ENCODE measurements at regions of chr13 and their contacts with region 1.

Region 1: DNA sequence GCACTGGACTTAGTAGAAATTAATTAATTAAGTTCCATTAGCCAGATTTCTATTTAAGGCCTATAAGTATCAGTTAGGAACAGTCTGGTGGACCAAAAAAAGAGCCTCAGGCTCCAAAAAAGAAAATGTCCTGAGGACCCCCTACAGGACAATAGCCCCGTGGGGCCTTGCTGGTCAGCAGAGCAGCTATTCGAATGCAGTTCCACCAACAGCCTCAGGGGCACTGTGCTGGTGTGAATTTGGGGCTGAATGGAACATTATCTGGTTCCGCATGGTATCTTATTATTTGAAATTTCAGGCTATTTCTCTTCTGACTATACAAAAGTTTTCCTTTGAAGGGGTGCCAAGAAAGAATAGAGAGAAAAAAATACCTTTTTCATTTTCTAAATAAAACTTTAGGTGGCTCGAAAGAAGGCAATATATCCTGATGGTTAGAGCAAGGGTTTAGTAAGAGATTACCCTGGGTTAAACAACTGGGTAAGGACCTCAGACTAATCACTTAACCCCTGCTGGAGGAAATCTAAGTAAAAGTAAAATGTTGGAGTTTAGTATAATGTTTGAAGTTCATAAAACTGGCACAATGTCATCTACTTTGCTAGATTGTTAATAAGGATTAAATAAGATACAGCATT is 147.2 kb downstream of the MIPEP start:
- DNase-seq: peak; percentile 65 to 66
- H3K4me3 ChIP-seq: no peak overlapping the region
- H3K4me3 Mint-ChIP-seq: no peak overlapping the region
- H3K27ac Mint-ChIP-seq: peak overlapping the region; percentile 64
- H3K4me1 ChIP-seq: peaks cover 39% of the 10 kb centered on the region
- H3K4me1 Mint-ChIP-seq: peaks cover 46% of the 10 kb centered on the region
- H3K27me3 ChIP-seq: no peaks in the 10 kb centered on the region
- H3K27me3 Mint-ChIP-seq: no peaks in the 10 kb centered on the region
- CTCF ChIP-seq: peak; percentile 65 to 81

Region 2: DNA sequence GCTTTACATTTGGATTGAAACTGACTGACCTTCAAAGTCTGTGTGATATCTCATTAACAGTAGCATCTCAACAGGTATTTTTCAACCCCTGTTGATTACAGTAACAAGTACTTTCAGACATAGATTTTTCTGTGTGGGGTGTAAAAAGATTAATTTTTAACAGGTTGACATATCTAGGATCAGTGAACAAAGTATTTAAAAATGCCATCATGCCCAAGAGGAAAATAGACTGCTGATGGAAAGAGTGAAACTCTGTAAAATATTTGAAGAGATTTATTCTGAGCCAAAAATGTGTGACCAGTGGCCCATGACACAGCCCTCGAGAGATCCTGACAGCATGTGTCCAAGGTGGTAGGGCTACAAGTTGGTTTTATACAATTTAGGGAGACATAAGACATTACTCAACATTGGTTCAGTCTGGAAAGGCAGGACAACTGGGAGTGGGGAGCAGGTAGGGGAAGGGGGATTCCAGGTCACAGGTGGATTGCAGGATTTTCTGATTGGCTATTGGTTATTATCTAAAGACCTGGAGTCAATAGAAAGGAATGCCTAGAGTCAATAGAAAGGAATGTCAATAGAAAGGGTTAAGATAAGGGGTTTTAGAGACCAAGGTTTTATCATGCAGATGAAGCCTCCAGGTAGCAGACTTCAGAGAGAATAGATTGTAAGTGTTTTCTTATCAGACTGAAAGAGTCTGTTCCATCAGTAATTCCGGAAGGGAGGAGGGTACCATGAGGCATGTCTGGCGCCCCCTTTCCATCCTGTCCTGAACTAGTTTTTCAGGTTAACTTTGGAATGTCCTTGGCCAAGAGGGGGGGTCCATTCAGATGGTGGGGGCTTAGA is 142.7 kb before region 1 on chr13:
- CTCF ChIA-PET with region 1: no interaction called
- POLR2A ChIA-PET with region 1: no interaction called
- intact Hi-C with region 1: loop called (anchors 1 kb)
- DNase-seq: peak; percentile 90 to 93
- H3K4me3 ChIP-seq: no peak overlapping the region
- H3K4me3 Mint-ChIP-seq: peak overlapping the region; percentile 42
- H3K27ac Mint-ChIP-seq: peak overlapping the region; percentile 94
- H3K4me1 ChIP-seq: peaks cover 35% of the 10 kb centered on the region
- H3K4me1 Mint-ChIP-seq: peaks cover 45% of the 10 kb centered on the region
- H3K27me3 ChIP-seq: no peaks in the 10 kb centered on the region
- H3K27me3 Mint-ChIP-seq: no peaks in the 10 kb centered on the region
- CTCF ChIP-seq: peak in 1 of 2 experiments; percentile 52

Region 3: DNA sequence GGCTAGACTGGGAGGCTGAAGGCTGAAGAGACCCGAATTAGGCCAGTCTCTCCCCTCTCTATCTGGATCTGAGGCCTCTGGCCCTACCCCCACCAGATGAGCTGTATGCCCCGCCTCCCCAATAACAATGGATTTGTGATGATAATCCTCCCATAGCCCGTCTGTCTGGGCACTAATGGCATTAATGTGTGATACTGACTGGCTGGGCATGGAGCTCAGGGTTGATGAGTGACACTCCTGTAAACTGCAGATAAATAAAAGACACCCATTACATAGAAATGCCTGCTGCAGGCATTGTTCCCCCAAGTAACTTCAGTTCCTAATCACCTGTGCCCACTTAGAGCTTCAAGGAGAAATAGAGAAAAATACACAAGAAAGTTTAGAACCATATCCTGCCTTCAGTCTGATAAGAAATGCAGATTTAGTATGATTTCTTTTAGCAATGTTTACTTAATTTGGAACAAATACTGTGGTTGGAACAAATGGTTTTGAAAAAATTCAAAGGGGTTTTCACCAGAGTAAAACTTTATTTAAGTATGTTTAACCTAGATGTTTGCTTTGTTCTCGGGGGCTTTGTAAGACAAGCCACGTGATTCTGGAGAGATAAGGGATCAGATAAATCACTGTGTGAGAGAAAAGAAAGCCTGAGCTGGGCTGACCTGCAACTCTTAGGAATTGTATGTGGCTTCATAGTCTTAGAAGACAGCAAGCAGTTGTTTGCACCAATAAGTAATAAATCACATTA is 111.5 kb before region 1 on chr13:
- CTCF ChIA-PET with region 1: interaction called, 3 read pairs
- POLR2A ChIA-PET with region 1: no interaction called
- intact Hi-C with region 1: loop called (anchors 5 kb)
- DNase-seq: peak; percentile 72 to 76
- H3K4me3 ChIP-seq: no peak overlapping the region
- H3K4me3 Mint-ChIP-seq: peak overlapping the region; percentile 52
- H3K27ac Mint-ChIP-seq: peak overlapping the region; percentile 87
- H3K4me1 ChIP-seq: peaks cover 76% of the 10 kb centered on the region
- H3K4me1 Mint-ChIP-seq: peaks cover 47% of the 10 kb centered on the region
- H3K27me3 ChIP-seq: no peaks in the 10 kb centered on the region
- H3K27me3 Mint-ChIP-seq: no peaks in the 10 kb centered on the region
- CTCF ChIP-seq: no peak

Region 4: DNA sequence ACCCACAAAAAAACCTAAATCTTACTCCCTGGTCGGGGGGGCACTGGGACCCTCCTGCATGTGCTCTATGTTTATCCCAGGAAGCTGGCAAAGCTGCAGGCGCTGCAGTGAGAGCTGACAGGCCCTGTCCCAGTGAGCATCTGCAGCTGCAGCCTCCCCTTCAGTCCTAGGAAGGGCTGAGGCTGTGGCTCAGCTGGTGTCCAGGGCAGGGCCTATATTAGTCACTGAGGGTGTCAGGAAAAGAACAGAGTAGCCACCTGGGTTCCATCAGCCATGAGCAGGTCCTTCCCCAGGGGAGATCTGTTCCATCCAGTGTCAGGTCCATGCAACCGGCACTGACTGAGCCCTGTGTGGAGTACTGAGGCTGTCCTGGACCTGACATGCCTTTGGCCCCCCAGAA is 51.3 kb before region 1 on chr13:
- CTCF ChIA-PET with region 1: no interaction called
- POLR2A ChIA-PET with region 1: no interaction called
- intact Hi-C with region 1: loop called (anchors 5 kb)
- DNase-seq: no peak
- H3K4me3 ChIP-seq: no peak overlapping the region
- H3K4me3 Mint-ChIP-seq: no peak overlapping the region
- H3K27ac Mint-ChIP-seq: no peak overlapping the region
- H3K4me1 ChIP-seq: no peaks in the 10 kb centered on the region
- H3K4me1 Mint-ChIP-seq: peaks cover 6% of the 10 kb centered on the region
- H3K27me3 ChIP-seq: no peaks in the 10 kb centered on the region
- H3K27me3 Mint-ChIP-seq: no peaks in the 10 kb centered on the region
- CTCF ChIP-seq: no peak

Region 5: DNA sequence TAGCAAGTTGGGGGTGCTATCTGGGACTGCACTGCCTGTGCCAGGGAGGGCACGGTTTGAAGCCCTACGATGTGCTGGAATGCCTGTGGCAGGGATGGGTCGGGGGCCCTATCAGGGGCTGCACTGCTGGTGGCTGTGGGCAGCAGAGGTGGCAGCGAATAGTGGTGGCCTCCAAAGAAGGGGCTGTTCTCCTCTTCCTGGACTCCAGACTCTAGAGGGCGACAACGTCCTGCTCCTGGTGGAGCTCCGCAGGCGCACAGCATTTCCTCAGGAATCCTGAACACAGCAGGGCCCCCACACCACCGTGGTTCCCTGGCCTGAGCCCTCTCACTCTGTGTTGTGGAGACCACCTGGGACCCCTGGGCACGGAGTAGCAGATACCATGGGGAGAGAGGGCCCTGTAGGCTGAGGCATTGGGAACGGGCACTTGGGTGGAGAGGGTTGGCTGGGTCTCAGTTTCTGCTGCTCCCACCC is 26.2 kb before region 1 on chr13:
- CTCF ChIA-PET with region 1: interaction called, 6 read pairs
- POLR2A ChIA-PET with region 1: no interaction called
- intact Hi-C with region 1: loop called (anchors 2 kb)
- DNase-seq: peak; percentile 72 to 74
- H3K4me3 ChIP-seq: no peak overlapping the region
- H3K4me3 Mint-ChIP-seq: no peak overlapping the region
- H3K27ac Mint-ChIP-seq: peak overlapping the region; percentile 24
- H3K4me1 ChIP-seq: peaks cover 22% of the 10 kb centered on the region
- H3K4me1 Mint-ChIP-seq: peaks cover 26% of the 10 kb centered on the region
- H3K27me3 ChIP-seq: no peaks in the 10 kb centered on the region
- H3K27me3 Mint-ChIP-seq: no peaks in the 10 kb centered on the region
- CTCF ChIP-seq: peak; percentile 46 to 51

Region 6: DNA sequence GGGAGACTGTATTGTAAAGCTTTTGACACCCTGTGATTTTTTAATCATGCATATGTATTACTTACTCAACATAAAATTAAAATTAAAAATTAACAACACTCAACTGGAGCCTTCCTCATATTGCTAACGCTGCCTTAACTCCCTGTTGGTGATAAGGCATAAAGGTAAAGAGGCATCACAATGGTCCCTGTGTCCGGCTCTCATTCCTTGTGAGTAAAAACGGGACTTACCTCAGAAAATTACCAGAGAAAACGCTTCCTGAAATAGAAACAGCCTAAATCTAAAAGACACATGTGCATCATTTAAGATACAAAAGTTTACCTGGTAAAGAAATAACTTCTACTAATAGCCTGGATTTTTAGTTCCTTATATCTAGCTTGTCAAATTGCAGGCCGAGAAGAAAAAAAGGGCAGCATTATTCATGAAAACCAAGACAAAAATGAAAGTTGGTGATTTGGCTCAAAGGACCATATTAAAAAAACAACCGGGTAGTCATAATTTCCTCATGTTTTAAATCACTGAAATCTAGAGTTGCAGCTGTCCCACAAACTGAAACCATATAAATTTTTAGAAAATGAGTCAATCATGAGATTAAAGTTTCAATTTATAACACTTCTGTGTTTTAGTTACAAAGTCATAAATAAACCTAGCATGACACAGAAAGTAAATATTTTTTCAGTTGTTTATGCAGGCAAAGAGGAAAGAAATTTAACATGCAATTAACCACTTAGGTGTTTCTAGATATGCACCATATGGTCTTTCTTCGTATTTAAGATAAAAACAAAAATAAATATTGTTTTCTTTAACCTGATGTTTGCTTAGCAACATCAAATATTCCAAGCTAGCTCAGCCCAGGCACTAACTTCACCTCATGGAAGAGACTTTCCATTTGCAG is 52.5 kb after region 1 on chr13:
- CTCF ChIA-PET with region 1: no interaction called
- POLR2A ChIA-PET with region 1: no interaction called
- intact Hi-C with region 1: no loop called
- DNase-seq: no peak
- H3K4me3 ChIP-seq: no peak overlapping the region
- H3K4me3 Mint-ChIP-seq: no peak overlapping the region
- H3K27ac Mint-ChIP-seq: no peak overlapping the region
- H3K4me1 ChIP-seq: peaks cover 11% of the 10 kb centered on the region; the same call in 1 of the 2 replicates
- H3K4me1 Mint-ChIP-seq: peaks cover 4% of the 10 kb centered on the region
- H3K27me3 ChIP-seq: no peaks in the 10 kb centered on the region
- H3K27me3 Mint-ChIP-seq: no peaks in the 10 kb centered on the region
- CTCF ChIP-seq: no peak

Region 7: GRCh38 chr13:23810685-23811240 is 68.8 kb after region 1 on chr13:
- CTCF ChIA-PET with region 1: no interaction called
- POLR2A ChIA-PET with region 1: no interaction called
- intact Hi-C with region 1: loop called (anchors 1 kb)
- DNase-seq: no peak
- H3K4me3 ChIP-seq: no peak overlapping the region
- H3K4me3 Mint-ChIP-seq: no peak overlapping the region
- H3K27ac Mint-ChIP-seq: no peak overlapping the region
- H3K4me1 ChIP-seq: peaks cover 16% of the 10 kb centered on the region
- H3K4me1 Mint-ChIP-seq: peaks cover 19% of the 10 kb centered on the region
- H3K27me3 ChIP-seq: no peaks in the 10 kb centered on the region
- H3K27me3 Mint-ChIP-seq: no peaks in the 10 kb centered on the region
- CTCF ChIP-seq: peak in 1 of 2 experiments; percentile 50

Region 8: DNA sequence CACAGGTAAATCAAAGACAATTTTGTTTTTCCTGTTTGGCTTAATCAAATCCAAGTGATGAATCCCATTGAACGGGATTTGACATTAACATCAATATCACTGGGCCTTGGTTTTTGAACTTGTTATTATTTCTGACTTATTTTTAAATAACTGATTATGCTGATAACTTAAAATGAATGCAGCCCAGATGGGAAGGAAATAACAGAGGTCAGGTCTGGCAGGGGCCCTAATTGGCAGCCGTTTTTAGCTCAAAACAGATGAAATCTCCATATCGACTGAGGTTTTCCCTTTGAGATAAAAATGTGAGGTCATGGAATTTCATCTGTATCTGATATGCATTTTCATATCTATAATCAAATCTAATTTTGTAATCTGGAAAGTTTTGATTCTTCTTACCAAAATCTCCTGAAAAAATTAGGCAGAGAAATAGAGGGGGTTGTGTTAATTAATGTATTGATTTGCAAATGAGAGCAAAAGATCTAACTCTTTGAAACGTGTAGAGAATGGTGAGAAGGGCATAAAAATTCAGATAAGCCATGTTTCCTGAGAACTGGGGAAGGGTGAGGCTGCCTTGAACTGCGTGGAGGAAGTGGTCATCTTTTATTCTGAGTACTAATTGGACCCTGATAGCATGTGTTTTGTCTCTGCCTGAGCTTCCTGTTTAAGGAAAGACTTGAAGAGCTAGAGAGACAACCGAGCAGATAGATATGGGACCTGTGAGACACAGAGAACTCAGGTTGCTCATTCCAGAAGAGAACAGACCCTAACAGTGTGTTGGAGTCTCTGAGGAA is 253.5 kb after region 1 on chr13:
- CTCF ChIA-PET with region 1: no interaction called
- POLR2A ChIA-PET with region 1: no interaction called
- intact Hi-C with region 1: no loop called
- DNase-seq: no peak
- H3K4me3 ChIP-seq: no peak overlapping the region
- H3K4me3 Mint-ChIP-seq: no peak overlapping the region
- H3K27ac Mint-ChIP-seq: no peak overlapping the region
- H3K4me1 ChIP-seq: peaks cover 27% of the 10 kb centered on the region
- H3K4me1 Mint-ChIP-seq: peaks cover 15% of the 10 kb centered on the region
- H3K27me3 ChIP-seq: no peaks in the 10 kb centered on the region
- H3K27me3 Mint-ChIP-seq: no peaks in the 10 kb centered on the region
- CTCF ChIP-seq: no peak

Measured in Caco-2 (cell line).